ENCODE measurements at regions of chr12 and their contacts with region 1.

Region 1: DNA sequence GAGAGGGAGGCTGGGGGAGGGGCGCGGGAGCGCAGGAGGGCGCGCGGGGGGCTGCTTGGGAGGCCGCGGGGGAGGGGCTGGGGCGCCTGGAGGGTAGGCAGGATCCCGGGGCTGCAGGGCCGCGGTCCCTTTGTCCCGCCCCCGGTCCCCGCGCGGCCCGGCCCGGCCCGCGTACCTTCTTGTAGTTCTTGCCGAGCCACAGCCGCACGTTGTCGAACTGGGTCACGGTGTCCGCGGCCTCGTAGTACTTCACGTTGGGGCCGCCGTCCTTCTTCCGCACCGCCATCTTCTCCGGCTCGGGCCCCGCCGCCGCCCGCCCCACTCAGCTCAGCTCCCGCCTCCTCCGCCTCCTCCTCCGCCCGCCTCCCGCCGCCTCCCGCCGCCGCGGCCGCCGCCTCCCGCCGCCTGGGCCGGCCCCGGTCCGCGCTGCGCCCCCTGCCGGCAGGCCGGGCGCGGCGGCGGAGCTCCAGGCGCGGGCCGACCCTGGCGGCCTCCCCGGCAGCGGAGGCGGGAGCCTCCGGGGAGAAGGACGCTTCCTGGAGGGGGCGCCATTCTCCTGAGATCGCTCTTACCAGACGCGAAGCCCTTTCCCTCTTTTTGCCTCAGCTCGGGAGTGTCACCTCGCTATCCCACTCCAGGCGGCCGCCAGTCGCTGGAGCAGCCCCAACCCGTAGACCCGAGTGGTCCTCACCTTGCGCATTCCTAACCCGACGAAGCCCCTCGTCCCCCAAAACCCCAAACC is at the start of gene SMARCC2:
- DNase-seq: peak; percentile 86
- H3K4me3 Mint-ChIP-seq: peak within 1 kb of the TSS; percentile 90
- H3K27ac Mint-ChIP-seq: peak within 1 kb of the TSS; percentile 93
- H3K4me1 Mint-ChIP-seq: peaks cover 58% of the 10 kb centered on the region
- H3K27me3 Mint-ChIP-seq: no peaks in the 10 kb centered on the region
- total RNA-seq, gene SMARCC2: 140 to 173 TPM

Region 2: GRCh38 chr12:55738123-55739024 is 451.0 kb before region 1 on chr12:
- CTCF ChIA-PET with region 1: interaction called, 12 read pairs
- POLR2A ChIA-PET with region 1: no interaction called
- DNase-seq: peak; percentile 90
- H3K4me3 Mint-ChIP-seq: peak overlapping the region; percentile 87
- H3K27ac Mint-ChIP-seq: peak overlapping the region; percentile 86
- H3K4me1 Mint-ChIP-seq: peaks cover 43% of the 10 kb centered on the region
- H3K27me3 Mint-ChIP-seq: peaks cover 11% of the 10 kb centered on the region

Region 3: GRCh38 chr12:56127888-56128669 is 61.3 kb before region 1 on chr12 and contains the start of gene ESYT1:
- CTCF ChIA-PET with region 1: interaction called, 79 read pairs
- POLR2A ChIA-PET with region 1: interaction called, 3 read pairs
- DNase-seq: peak; percentile 99
- H3K4me3 Mint-ChIP-seq: peak within 1 kb of the TSS; percentile 91
- H3K27ac Mint-ChIP-seq: peak within 1 kb of the TSS; percentile 93
- H3K4me1 Mint-ChIP-seq: peaks cover 72% of the 10 kb centered on the region
- H3K27me3 Mint-ChIP-seq: no peaks in the 10 kb centered on the region
- total RNA-seq, gene ESYT1: 367 to 399 TPM

Region 4: DNA sequence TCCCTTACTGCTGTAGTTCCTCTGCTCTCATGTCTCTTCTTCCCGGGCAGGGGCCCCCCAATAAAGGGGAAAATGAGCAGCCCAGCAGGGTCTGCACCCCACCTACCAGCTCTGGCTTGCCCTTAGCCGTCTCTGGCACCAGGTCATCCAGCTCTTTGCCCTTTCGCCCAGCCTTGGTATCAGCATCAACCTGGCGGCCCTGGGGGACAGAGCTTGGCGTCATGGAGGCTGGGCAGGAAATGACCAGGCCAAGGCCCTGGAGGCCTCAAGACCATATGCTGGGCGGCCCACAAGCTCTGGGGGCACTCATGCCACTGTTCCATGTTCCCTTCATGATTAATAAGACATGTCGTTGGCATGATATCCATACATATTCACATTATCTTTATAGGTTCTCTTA is 16.5 kb before region 1 on chr12:
- CTCF ChIA-PET with region 1: interaction called, 80 read pairs
- POLR2A ChIA-PET with region 1: no interaction called
- DNase-seq: no peak
- H3K4me3 Mint-ChIP-seq: no peak overlapping the region
- H3K27ac Mint-ChIP-seq: no peak overlapping the region
- H3K4me1 Mint-ChIP-seq: no peaks in the 10 kb centered on the region
- H3K27me3 Mint-ChIP-seq: no peaks in the 10 kb centered on the region

Region 5: GRCh38 chr12:56221527-56222387 is 32.4 kb after region 1 on chr12 and contains the start of gene RNF41:
- CTCF ChIA-PET with region 1: interaction called, 39 read pairs
- POLR2A ChIA-PET with region 1: interaction called, 4 read pairs
- DNase-seq: peak; percentile 95
- H3K4me3 Mint-ChIP-seq: peak within 1 kb of the TSS; percentile 90
- H3K27ac Mint-ChIP-seq: peak within 1 kb of the TSS; percentile 93
- H3K4me1 Mint-ChIP-seq: peaks cover 49% of the 10 kb centered on the region
- H3K27me3 Mint-ChIP-seq: no peaks in the 10 kb centered on the region
- total RNA-seq, gene RNF41: 30.1 to 31.6 TPM

Region 6: GRCh38 chr12:56359851-56360767 is 170.8 kb after region 1 on chr12 and contains the start of gene STAT2:
- CTCF ChIA-PET with region 1: interaction called, 11 read pairs
- POLR2A ChIA-PET with region 1: no interaction called
- DNase-seq: peak; percentile 100
- H3K4me3 Mint-ChIP-seq: peak within 1 kb of the TSS; percentile 91
- H3K27ac Mint-ChIP-seq: peak within 1 kb of the TSS; percentile 99
- H3K4me1 Mint-ChIP-seq: peaks cover 32% of the 10 kb centered on the region
- H3K27me3 Mint-ChIP-seq: no peaks in the 10 kb centered on the region
- total RNA-seq, gene STAT2: 391 to 398 TPM

Measured in activated CD4-positive, alpha-beta T cell treated with anti-CD3 and anti-CD28 coated beads, Interleukin-2, amount 10 ng/mL, durations not matched to agents 7 days and 5 days (primary cell).